Activated naive CD4-positive, alpha-beta T cell treated with anti-CD3 and anti-CD28 coated beads for 36 hours (primary cell): ENCODE measurements at regions of chr14 and their contacts with region 1.

Region 1: GRCh38 chr14:97994020-97994531 is 1196.9 kb downstream of the VRK1 start:
- DNase-seq: peak; percentile 71
- H3K4me3 Mint-ChIP-seq: peak overlapping the region; percentile 70
- H3K27ac Mint-ChIP-seq: peak overlapping the region; percentile 100
- H3K4me1 Mint-ChIP-seq: peaks cover 82% of the 10 kb centered on the region
- H3K27me3 Mint-ChIP-seq: no peaks in the 10 kb centered on the region

Region 2: DNA sequence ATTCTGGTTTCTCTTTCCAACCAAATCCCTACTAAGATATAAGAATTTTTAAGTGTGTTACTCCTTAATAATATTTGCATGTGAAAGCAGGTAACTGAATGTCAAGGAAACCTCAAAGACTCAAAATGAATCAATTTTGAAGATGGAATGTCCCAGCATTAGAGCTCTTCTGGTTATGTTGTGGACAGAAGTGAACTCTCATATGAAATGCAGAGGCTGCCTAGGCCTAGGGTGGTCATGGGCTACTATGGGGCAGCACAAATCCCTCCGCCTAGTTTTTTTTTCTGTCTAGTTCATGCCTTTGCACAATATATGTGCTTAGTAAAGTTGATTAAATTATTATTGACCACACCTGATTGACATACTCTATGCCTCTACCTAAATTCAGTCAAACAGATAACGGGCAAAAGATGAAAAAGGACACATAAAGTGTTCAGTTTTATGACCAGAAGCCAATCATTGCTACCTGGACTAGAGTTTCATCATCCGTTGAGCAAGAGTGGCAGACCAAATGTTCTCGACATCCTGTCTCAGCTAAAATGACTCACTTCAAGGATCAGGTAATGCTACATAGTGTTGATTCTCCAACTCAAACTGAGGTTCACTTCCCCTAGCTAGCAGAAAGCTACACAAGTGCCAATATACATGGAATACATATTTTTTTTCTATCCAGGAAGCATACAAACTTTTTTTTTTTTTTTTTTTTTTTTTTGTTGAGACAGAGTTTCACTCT is 14.5 kb after region 1 on chr14:
- CTCF ChIA-PET with region 1: interaction called, 4 read pairs
- intact Hi-C with region 1: loop called (anchors 1 kb)
- DNase-seq: peak; percentile 65
- H3K4me3 Mint-ChIP-seq: no peak overlapping the region
- H3K27ac Mint-ChIP-seq: peak overlapping the region; percentile 96
- H3K4me1 Mint-ChIP-seq: peaks cover 62% of the 10 kb centered on the region
- H3K27me3 Mint-ChIP-seq: no peaks in the 10 kb centered on the region